Activated CD4-positive, alpha-beta T cell treated with anti-CD3 and anti-CD28 coated beads, Interleukin-2, amount 10 ng/mL, durations not matched to agents 24 days and 14 days (primary cell): ENCODE measurements at regions of chr13 and their contacts with region 1.

Region 1: GRCh38 chr13:24220086-24220703 is 59.7 kb downstream of the SPATA13 start:
- DNase-seq: peak; percentile 90
- H3K4me3 Mint-ChIP-seq: no peak overlapping the region
- H3K27ac Mint-ChIP-seq: peak overlapping the region; percentile 5
- H3K4me1 Mint-ChIP-seq: peaks cover 37% of the 10 kb centered on the region
- H3K27me3 Mint-ChIP-seq: no peaks in the 10 kb centered on the region

Region 2: GRCh38 chr13:23921451-23921888 is 298.7 kb before region 1 on chr13:
- intact Hi-C with region 1: loop called (anchors 1 kb)
- DNase-seq: peak; percentile 79
- H3K4me3 Mint-ChIP-seq: no peak overlapping the region
- H3K27ac Mint-ChIP-seq: no peak overlapping the region
- H3K4me1 Mint-ChIP-seq: peaks cover 2% of the 10 kb centered on the region
- H3K27me3 Mint-ChIP-seq: peaks cover 56% of the 10 kb centered on the region

Region 3: GRCh38 chr13:24020375-24020830 is 199.8 kb before region 1 on chr13:
- intact Hi-C with region 1: loop called (anchors 1 kb)
- DNase-seq: peak; percentile 84
- H3K4me3 Mint-ChIP-seq: no peak overlapping the region
- H3K27ac Mint-ChIP-seq: no peak overlapping the region
- H3K4me1 Mint-ChIP-seq: peaks cover 3% of the 10 kb centered on the region
- H3K27me3 Mint-ChIP-seq: peaks cover 3% of the 10 kb centered on the region

Region 4: DNA sequence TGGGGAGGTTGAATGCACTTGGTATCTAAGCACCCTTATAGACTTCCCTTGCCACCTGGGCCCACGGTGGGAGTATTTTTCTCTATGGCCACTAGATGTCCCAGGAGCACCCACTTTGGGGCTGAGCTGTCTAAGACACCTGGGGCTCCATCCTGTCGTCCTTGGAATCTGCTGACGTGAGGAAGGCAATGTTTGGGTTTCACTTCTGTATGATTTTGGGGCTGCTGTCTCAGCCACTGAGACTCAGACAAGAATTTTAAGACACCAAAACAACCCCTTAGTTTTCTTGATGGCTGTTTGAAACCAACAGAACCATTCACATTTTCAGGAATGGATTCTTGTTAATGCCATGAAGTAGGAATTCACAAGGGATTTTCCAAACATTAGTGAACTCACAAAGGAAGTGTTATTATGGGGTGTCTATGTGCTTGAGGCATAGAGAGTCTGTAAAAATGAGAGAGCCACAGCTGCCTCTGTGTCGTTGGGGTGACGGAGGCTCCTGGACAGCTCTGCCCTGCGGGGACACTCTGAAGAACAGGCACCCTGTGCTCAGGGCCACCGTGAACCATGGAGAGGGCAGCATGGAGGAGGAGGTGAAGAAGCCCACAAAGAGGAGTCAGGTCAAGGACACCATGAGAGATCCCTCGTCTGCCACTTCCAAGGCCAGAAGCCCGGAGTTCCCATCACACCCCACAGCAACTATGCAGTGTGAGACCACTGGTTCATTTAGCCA is 166.5 kb before region 1 on chr13:
- intact Hi-C with region 1: loop called (anchors 1 kb)
- DNase-seq: peak; percentile 89
- H3K4me3 Mint-ChIP-seq: no peak overlapping the region
- H3K27ac Mint-ChIP-seq: no peak overlapping the region
- H3K4me1 Mint-ChIP-seq: peaks cover 11% of the 10 kb centered on the region
- H3K27me3 Mint-ChIP-seq: peaks cover 19% of the 10 kb centered on the region

Region 5: DNA sequence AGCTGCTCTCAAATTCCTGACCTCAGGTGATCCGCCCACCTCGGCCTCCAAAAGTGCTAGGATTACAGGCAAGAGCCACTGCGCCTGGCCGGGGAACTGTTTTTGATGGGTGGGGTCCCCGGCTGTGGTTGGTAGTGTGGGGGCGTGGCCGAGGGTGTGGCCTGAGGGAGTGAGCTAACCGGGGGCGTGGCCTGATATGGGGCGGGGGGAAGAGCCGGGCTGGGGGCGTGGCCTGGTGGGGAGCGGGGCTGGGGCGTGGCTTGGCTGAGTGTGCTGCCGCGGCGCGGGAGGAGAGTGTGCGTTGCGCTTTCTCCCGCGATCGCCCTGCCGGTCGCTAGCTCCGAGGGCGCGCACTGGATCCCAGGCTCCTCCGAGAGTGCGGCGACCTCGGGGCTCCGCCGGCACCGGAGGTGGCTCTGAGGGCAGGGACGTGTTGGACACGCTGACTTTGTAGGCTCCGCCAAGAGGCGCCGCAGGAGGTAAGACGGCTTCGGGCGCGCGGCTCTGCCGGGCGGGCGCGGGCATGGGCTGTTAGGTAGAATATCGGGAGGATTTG is 59.7 kb before region 1 on chr13 and contains the start of gene SPATA13:
- intact Hi-C with region 1: loop called (anchors 5 kb)
- DNase-seq: peak; percentile 97
- H3K4me3 Mint-ChIP-seq: peak within 1 kb of the TSS; percentile 95
- H3K27ac Mint-ChIP-seq: peak within 1 kb of the TSS; percentile 90
- H3K4me1 Mint-ChIP-seq: peaks cover 21% of the 10 kb centered on the region
- H3K27me3 Mint-ChIP-seq: peaks cover 27% of the 10 kb centered on the region
- total RNA-seq, gene SPATA13: 41.9 and 43.6 TPM in 2 replicates

Region 6: GRCh38 chr13:24187185-24187584 is 33.0 kb before region 1 on chr13:
- intact Hi-C with region 1: loop called (anchors 2 kb)
- DNase-seq: no peak
- H3K4me3 Mint-ChIP-seq: no peak overlapping the region
- H3K27ac Mint-ChIP-seq: peak overlapping the region; percentile 78
- H3K4me1 Mint-ChIP-seq: peaks cover 39% of the 10 kb centered on the region
- H3K27me3 Mint-ChIP-seq: no peaks in the 10 kb centered on the region